ENCODE measurements at regions of chr7 and their contacts with region 1.

Region 1: DNA sequence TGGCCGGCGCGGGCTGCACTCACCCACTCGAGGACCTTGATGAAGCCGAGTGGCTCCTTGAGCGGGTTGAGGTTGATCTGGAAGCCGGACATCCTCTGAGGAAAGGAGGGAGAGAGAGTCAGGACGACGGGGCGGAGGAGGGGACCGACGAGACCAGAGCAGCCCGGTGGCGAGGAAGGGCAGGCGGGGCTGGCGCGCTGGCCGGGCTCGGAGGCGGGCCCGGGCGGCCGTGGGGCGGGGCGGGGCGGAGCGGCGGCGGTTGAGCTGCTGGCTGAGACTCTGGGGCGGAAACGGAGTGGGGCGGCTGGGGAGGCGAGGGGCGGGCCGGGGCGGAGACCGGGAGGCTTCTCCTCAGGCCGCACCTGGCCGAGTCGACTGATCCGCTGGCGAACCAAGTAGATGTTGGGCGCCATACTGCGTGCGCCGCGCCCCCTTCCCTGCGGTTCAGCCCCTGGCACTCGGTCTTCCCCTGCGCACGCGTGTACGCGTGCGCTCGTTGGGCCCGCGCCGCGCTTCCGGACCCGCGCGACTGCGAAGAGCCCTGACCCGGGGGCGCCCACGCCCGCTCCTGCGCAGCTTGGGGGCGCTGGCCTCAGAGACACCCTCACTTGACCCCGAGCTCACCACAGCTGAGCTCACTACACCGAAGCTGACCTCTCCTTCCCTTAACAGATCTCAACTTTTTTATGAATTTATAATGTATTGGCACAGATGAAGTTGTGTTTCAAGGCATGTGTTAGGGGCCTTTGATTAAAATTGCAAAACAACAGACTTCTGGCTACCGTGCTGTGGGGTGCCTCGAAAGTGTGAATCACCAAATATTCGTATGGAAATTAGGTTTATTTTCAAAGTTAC is at the start of gene SYPL1:
- DNase-seq: peak; percentile 70 to 95
- H3K4me3 ChIP-seq: peak within 1 kb of the TSS; percentile 69 to 76
- H3K27ac ChIP-seq: peak within 1 kb of the TSS; percentile 98
- H3K4me1 ChIP-seq: peaks cover 3 to 12% of the 10 kb centered on the region in 2 donors
- H3K27me3 ChIP-seq: no peaks in the 10 kb centered on the region
- CTCF ChIP-seq: peak in 1 of 3 experiments; percentile 16
- total RNA-seq, gene SYPL1: 17.5 TPM

Region 2: GRCh38 chr7:106064771-106065585 is 47.4 kb before region 1 on chr7:
- intact Hi-C with region 1: loop called (anchors 1 kb)
- DNase-seq: peak; percentile 82 to 93
- H3K4me3 ChIP-seq: peak overlapping the region; percentile 37 to 50
- H3K27ac ChIP-seq: peak overlapping the region; percentile 68 to 75
- H3K4me1 ChIP-seq: peaks cover 7 to 9% of the 10 kb centered on the region in 2 donors
- H3K27me3 ChIP-seq: no peaks in the 10 kb centered on the region
- CTCF ChIP-seq: no peak

Region 3: GRCh38 chr7:106153891-106154449 is 41.6 kb after region 1 on chr7:
- intact Hi-C with region 1: loop called (anchors 2 kb)
- DNase-seq: peak in 1 of 2 donors; percentile 89
- H3K4me3 ChIP-seq: no peak overlapping the region
- H3K27ac ChIP-seq: no peak overlapping the region
- H3K4me1 ChIP-seq: no peaks in the 10 kb centered on the region
- H3K27me3 ChIP-seq: no peaks in the 10 kb centered on the region
- CTCF ChIP-seq: peak; percentile 85 to 96 (median 91)

Region 4: DNA sequence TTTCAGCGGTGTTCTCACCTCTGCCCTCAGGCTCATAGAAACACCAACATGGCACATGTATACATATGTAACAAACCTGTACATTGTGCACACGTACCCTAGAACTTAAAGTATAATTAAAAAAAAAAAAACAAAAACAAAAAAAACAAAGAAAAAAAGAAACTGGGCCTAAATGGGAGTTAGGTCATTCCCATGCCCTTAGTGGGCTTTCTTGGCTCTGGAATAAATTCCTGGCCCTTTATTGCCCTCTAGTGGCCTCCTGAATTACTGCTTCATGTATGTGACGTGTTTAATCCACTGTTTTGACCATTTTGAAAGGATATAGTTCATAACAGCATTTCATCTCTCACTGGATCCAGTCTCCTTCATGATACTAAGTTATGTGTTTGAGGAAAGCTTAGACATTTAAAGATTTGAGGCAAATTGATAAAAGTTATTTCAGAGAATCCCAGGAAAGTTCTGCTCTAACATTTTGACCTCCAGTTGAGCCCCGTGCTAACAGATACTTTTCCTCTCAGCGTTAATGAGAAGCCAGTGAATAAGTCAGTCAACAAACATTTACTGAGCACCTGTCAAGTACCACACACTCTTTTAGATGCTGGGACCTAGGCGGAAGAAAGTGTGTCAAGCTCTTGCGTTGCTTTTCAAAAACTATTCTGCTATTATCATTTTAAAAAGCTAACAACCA is 54.5 kb after region 1 on chr7:
- intact Hi-C with region 1: loop called (anchors 2 kb)
- DNase-seq: peak in 1 of 2 donors; percentile 74
- H3K4me3 ChIP-seq: no peak overlapping the region
- H3K27ac ChIP-seq: peak overlapping the region in 1 of 2 donors; percentile 25
- H3K4me1 ChIP-seq: peaks cover 0 to 6% of the 10 kb centered on the region in 2 donors
- H3K27me3 ChIP-seq: no peaks in the 10 kb centered on the region
- CTCF ChIP-seq: peak; percentile 50 to 77 (median 75)

Measured in ascending aorta (tissue), 2 donors.